GM13977 (cell line): ENCODE measurements at regions of chr2 and their contacts with region 1.

Region 1: DNA sequence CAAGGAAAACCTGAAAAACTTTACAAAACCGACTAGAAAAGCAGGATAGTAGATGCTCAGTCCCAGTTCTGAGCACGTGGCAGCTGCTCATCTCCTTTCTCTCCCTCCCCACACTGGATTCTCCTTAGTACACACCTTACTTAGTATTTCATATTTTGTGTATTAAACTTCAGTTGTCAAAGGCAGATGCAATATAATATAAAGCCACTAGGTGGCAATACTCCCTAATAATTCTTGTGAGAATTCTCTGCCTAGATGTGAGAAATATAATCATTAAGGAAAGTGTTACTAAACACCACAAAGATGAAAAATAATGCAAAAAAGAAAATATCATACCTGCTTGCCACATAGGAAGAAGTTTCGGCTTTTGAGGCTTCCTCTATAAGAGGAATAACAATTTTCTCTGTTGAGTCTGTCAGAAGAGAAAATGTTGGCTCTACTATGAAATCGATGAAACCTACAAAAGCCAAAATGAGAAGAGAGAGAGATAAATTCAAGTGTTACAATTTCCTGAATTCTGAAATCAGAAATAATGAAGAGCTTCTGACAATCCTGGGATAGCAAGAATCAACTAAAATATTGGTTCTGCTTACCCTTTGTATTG is 200.6 kb downstream of the PPP1R1C start:
- DNase-seq: peak; percentile 8
- CTCF ChIP-seq: peak; percentile 66

Region 2: GRCh38 chr2:182477774-182478173 is 291.5 kb after region 1 on chr2:
- in situ Hi-C with region 1: no loop called
- DNase-seq: no peak
- CTCF ChIP-seq: no peak

Region 3: DNA sequence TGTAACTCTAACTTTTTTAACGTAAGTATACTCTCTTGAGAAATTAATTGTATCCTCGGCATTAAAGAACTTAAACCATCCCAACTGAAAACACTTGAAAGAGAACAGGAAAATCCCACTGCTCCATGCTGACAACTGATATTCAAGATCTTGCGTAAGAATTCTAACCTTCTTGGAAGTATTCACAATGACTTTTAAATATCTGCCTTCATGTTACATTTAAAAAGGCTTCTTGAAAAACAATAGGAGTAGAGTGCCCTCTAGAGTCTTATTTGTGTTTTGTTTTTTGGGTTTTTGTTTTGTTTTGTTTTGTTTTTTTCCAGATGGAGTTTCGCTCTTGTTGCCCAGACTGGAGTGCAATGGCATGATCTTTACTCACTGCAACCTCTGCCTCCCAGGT is 464.5 kb after region 1 on chr2:
- in situ Hi-C with region 1: loop called (anchors 10 kb)
- DNase-seq: peak; percentile 9
- CTCF ChIP-seq: peak; percentile 47